Activated CD4-positive, alpha-beta T cell treated with anti-CD3 and anti-CD28 coated beads, Interleukin-2, amount 10 ng/mL, durations not matched to agents 24 days and 14 days (primary cell): ENCODE measurements at regions of chr17 and their contacts with region 1.

Region 1: GRCh38 chr17:6640536-6641373 is at the starts of genes KIAA0753 and TXNDC17:
- DNase-seq: peak; percentile 99
- H3K4me3 Mint-ChIP-seq: peak within 1 kb of the TSS; percentile 93
- H3K27ac Mint-ChIP-seq: peak within 1 kb of the TSS; percentile 100
- H3K4me1 Mint-ChIP-seq: peaks cover 59% of the 10 kb centered on the region
- H3K27me3 Mint-ChIP-seq: no peaks in the 10 kb centered on the region
- total RNA-seq, gene KIAA0753: 20.9 and 23.9 TPM in 2 replicates
- total RNA-seq, gene TXNDC17: 92.7 and 102 TPM in 2 replicates

Region 2: GRCh38 chr17:5584383-5585286 is 1056.1 kb before region 1 on chr17 and contains the start of gene NLRP1:
- intact Hi-C with region 1: loop called (anchors 10 kb)
- DNase-seq: peak; percentile 98
- H3K4me3 Mint-ChIP-seq: peak within 1 kb of the TSS; percentile 97
- H3K27ac Mint-ChIP-seq: peak within 1 kb of the TSS; percentile 96
- H3K4me1 Mint-ChIP-seq: peaks cover 53% of the 10 kb centered on the region
- H3K27me3 Mint-ChIP-seq: peaks cover 6% of the 10 kb centered on the region
- total RNA-seq, gene NLRP1: 19.6 and 23.0 TPM in 2 replicates

Region 3: GRCh38 chr17:6443692-6444569 is 196.8 kb before region 1 on chr17 and contains the start of gene PIMREG:
- intact Hi-C with region 1: loop called (anchors 10 kb)
- DNase-seq: peak; percentile 97
- H3K4me3 Mint-ChIP-seq: peak within 1 kb of the TSS; percentile 95
- H3K27ac Mint-ChIP-seq: peak within 1 kb of the TSS; percentile 96
- H3K4me1 Mint-ChIP-seq: peaks cover 18% of the 10 kb centered on the region
- H3K27me3 Mint-ChIP-seq: peaks cover 32% of the 10 kb centered on the region
- total RNA-seq, gene PIMREG: 4.6 and 6.4 TPM in 2 replicates

Region 4: DNA sequence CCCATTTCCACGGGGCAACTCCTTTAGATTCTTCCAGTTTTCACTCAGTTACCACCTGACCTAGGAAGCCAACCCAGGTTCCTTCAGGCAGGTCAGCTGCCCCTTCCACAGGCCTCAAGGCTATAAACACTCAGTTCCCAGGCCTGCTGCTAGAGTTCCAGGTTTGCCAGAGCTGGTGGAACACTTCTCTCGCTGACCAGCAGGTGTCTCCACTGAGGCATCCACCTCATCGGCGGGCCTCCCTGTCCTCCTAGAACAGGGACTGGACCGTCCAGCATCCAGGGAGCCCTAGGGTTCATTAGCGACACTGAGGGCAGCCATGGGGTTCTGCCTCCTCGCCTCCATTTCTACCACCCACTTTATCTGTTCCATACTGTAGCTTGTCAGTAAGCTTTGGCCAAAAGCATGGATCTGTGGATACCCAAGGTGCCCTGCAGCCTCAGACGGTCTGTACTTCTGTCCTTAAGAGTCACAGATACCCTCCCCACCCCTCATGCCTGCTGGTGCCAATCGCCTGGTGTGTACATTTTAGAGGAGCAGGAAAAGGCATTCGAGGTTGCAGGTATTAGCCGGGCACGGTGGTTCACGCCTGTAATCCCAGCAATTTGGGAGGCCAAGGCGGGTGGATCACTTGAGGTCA is 167.5 kb before region 1 on chr17:
- intact Hi-C with region 1: loop called (anchors 2 kb)
- DNase-seq: peak; percentile 91
- H3K4me3 Mint-ChIP-seq: no peak overlapping the region
- H3K27ac Mint-ChIP-seq: no peak overlapping the region
- H3K4me1 Mint-ChIP-seq: peaks cover 5% of the 10 kb centered on the region
- H3K27me3 Mint-ChIP-seq: peaks cover 7% of the 10 kb centered on the region

Region 5: DNA sequence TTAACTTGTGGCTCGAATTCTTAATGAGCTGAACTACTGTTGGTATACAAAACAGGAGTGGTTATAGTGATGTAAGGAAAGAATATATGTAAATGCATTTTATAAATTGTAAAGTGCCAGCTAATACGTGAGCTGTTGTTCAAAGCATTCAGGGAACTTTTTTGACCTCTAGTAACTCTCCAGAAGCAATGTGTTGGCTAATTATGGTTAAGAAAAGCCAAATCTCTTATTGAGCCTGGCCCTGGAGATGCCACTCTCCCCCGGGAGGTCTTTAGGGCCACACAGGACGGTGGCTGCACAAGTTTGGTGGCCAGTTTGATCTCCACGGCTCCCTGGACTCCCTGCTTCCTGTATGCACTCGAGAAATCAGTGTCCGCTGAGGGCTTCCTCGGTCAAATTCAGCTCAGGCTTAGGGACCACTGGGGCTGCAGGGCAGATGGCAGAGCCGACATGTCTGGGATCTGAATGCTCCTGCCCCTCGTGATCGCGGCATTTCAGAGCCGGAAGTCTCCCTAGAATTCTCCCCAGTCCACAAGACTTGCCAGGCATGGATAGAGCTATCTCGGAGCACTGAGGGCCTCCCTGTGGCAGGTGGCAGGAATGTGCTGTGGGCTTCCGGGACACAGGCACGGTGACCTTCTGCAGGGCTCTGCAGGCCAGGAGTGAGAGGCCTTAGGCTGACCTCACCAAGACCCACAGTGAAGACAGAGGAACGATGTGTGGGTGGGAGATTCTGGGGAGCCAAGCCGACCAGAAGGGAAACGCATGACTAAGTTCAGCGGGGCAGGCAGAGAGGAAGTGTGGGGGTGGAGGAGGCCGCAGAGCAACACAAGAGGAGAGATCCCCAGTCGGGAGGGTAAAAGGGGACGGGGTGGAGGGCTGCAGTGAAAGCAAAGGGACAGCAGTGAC is 65.8 kb before region 1 on chr17:
- intact Hi-C with region 1: loop called (anchors 5 kb)
- DNase-seq: peak; percentile 80
- H3K4me3 Mint-ChIP-seq: peak overlapping the region; percentile 49
- H3K27ac Mint-ChIP-seq: peak overlapping the region; percentile 68
- H3K4me1 Mint-ChIP-seq: peaks cover 22% of the 10 kb centered on the region
- H3K27me3 Mint-ChIP-seq: no peaks in the 10 kb centered on the region

Region 6: GRCh38 chr17:6651357-6651918 is 10.7 kb after region 1 on chr17 and contains the starts of genes C17orf100 and MED31:
- intact Hi-C with region 1: loop called (anchors 1 kb)
- DNase-seq: peak; percentile 99
- H3K4me3 Mint-ChIP-seq: peak within 1 kb of the TSS; percentile 93
- H3K27ac Mint-ChIP-seq: peak within 1 kb of the TSS; percentile 99
- H3K4me1 Mint-ChIP-seq: peaks cover 50% of the 10 kb centered on the region
- H3K27me3 Mint-ChIP-seq: peaks cover 16% of the 10 kb centered on the region
- total RNA-seq, gene C17orf100: 1.8 and 1.9 TPM in 2 replicates
- total RNA-seq, gene MED31: 24.3 and 25.7 TPM in 2 replicates